ENCODE measurements at regions of chr9 and their contacts with region 1.

Region 1: GRCh38 chr9:134024828-134025605 is at the start of gene BRD3OS:
- DNase-seq: peak; percentile 93
- H3K4me3 Mint-ChIP-seq: peak within 1 kb of the TSS; percentile 77
- H3K27ac Mint-ChIP-seq: no peak within 1 kb of the TSS
- H3K4me1 Mint-ChIP-seq: peaks cover 11% of the 10 kb centered on the region
- H3K27me3 Mint-ChIP-seq: no peaks in the 10 kb centered on the region
- total RNA-seq, gene BRD3OS: 6.3 to 6.7 TPM

Region 2: GRCh38 chr9:133967014-133967741 is 57.8 kb before region 1 on chr9:
- CTCF ChIA-PET with region 1: no interaction called
- intact Hi-C with region 1: no loop called
- DNase-seq: no peak
- H3K4me3 Mint-ChIP-seq: no peak overlapping the region
- H3K27ac Mint-ChIP-seq: no peak overlapping the region
- H3K4me1 Mint-ChIP-seq: no peaks in the 10 kb centered on the region
- H3K27me3 Mint-ChIP-seq: no peaks in the 10 kb centered on the region

Region 3: DNA sequence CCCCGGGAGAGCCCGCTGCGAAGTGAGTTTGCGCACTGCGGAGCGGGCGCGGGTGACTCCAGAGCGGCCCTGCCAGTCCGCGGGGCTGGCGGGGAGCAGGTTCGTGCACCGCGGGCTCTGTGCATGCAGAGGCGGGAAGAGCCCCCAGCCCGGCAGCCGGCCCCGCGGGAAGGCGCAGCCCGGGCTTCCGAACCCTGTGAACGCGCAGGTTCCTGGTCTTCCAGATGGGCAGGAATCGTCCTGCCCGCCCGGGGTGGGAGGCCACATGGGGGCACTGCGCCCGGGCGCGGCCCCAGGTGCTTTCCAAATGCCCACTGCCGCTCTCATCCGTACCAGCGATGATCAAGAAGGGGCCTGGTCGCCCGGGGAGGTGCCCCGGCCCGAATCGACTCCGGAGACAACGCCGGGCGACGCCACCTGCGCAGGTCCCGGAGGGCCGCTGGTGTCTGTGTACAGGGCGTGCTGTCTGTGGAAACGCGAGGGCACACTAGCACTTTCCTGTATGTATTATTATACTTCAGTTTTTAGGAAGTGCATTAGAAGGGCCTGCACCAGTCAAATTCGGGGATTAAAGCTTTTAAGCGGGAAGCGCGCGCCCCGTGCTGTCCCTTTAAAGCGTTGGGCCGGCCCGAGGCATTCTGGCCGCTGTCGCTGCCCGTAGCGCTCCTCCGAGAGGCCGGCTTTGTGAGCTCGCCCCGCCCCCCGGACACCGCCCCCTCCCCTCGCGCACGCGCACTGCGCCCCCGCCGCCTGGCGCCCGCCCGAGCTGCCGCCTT is 110.5 kb after region 1 on chr9 and contains the start of gene WDR5:
- CTCF ChIA-PET with region 1: no interaction called
- intact Hi-C with region 1: loop called (anchors 5 kb)
- DNase-seq: peak; percentile 92
- H3K4me3 Mint-ChIP-seq: peak within 1 kb of the TSS; percentile 86
- H3K27ac Mint-ChIP-seq: peak within 1 kb of the TSS; percentile 92
- H3K4me1 Mint-ChIP-seq: peaks cover 37% of the 10 kb centered on the region
- H3K27me3 Mint-ChIP-seq: no peaks in the 10 kb centered on the region
- total RNA-seq, gene WDR5: 39.4 to 40.4 TPM

Measured in activated naive CD4-positive, alpha-beta T cell treated with anti-CD3 and anti-CD28 coated beads for 36 hours (primary cell).